ENCODE measurements at regions of chr5 and their contacts with region 1.

Region 1: GRCh38 chr5:179613460-179614071 is 9.9 kb downstream of the HNRNPH1 start:
- DNase-seq: no peak
- H3K4me3 ChIP-seq: no peak overlapping the region
- H3K27ac ChIP-seq: no peak overlapping the region
- H3K4me1 ChIP-seq: peaks cover 55% of the 10 kb centered on the region
- H3K27me3 ChIP-seq: no peaks in the 10 kb centered on the region
- CTCF ChIP-seq: no peak
- POLR2A ChIP-seq: no peak

Region 2: DNA sequence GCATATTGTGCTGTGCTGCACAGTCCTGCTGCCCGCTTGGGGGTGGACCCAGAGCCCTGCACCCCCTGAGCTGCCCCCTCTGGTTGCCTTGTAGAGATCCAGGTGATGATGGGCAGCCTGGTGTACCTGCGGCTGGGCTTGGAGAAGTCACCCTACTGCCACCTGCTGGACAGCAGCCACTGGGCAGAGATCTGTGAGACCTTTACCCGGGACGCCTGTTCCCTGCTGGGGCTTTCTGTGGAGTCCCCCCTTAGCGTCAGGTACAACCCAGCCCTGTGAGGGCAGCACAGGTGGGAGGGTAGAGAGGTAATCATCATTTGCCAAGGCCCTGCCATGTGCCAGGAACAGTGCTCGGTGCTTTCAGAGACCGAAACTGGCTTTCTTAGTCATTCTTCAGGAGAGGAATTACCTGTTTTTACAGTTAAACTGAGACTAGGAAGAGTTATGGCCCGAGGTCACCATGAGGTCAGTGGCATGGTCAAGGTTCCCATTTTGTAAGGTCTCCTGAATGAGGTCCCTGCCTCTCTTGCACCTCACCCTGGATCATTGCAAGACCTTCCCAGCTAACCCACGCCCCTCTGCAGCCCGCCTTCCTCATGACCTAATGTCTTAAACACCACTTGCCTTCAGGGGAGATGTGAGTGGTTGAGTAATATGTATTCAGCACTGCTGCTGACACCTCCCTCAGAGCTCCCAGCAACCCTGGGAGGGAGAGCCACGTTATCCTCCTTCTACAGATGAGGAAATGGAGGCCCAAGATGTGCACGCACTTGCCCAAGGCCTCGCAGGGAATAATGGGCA is 1467.3 kb before region 1 on chr5:
- intact Hi-C with region 1: loop called (anchors 10 kb)
- DNase-seq: no peak
- H3K4me3 ChIP-seq: no peak overlapping the region
- H3K27ac ChIP-seq: no peak overlapping the region
- H3K4me1 ChIP-seq: no peaks in the 10 kb centered on the region
- H3K27me3 ChIP-seq: no peaks in the 10 kb centered on the region
- CTCF ChIP-seq: peak; percentile 29 to 55 (median 54)
- POLR2A ChIP-seq: no peak

Region 3: DNA sequence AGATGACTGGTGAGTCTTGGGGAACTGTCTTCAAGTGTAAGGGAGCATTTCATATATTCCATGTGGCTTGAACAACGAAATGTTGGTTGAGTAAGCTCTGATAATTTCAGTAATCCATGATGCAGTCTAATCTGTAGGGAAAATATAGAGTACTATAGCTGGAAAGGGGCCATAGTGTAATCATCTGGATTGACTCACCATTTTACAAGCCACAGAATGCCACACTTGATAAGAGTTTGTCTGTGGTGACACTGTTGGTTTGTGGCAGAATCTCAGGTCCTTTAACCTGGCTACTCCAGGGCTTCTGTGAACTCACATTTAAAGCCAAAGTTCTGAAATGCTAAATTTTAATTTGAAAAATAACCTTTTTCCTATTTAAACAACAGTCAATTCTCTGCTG is 102.7 kb after region 1 on chr5:
- intact Hi-C with region 1: no loop called
- DNase-seq: no peak
- H3K4me3 ChIP-seq: no peak overlapping the region
- H3K27ac ChIP-seq: no peak overlapping the region
- H3K4me1 ChIP-seq: no peaks in the 10 kb centered on the region
- H3K27me3 ChIP-seq: no peaks in the 10 kb centered on the region
- CTCF ChIP-seq: no peak
- POLR2A ChIP-seq: no peak